Psoas muscle (tissue), 8 donors: ENCODE measurements at regions of chr5 and their contacts with region 1.

Region 1: DNA sequence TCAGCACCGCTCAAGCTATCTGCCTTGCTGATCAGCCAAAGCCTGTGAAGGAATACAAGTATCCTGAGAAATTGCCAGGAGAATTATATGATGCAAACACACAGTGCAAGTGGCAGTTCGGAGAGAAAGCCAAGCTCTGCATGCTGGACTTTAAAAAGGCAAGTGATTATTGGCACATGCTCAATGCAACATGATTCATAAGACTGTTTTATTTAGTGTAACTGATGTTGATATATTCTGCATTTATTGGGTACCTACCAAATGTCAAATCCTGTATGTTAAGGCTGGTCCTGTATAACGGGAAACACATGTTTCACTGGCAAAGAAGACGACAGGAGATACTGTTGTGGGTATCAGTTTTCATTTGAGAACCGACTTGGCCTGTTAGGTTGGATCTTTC is 69.0 kb downstream of the ADAMTS16 start:
- DNase-seq: no peak
- ATAC-seq: peak; percentile 56 to 94 (median 82)
- H3K4me3 ChIP-seq: peak overlapping the region; percentile 13
- H3K27ac ChIP-seq: peak overlapping the region; percentile 76
- H3K4me1 ChIP-seq: peaks cover 14% of the 10 kb centered on the region
- H3K27me3 ChIP-seq: no peaks in the 10 kb centered on the region
- CTCF ChIP-seq: no peak

Region 2: GRCh38 chr5:5164163-5164562 is 44.9 kb before region 1 on chr5:
- intact Hi-C with region 1: loop called in 1 of 2 experiments (anchors 5 kb)
- DNase-seq: no peak
- ATAC-seq: no peak
- H3K4me3 ChIP-seq: no peak overlapping the region
- H3K27ac ChIP-seq: no peak overlapping the region
- H3K4me1 ChIP-seq: peaks cover 4% of the 10 kb centered on the region
- H3K27me3 ChIP-seq: no peaks in the 10 kb centered on the region
- CTCF ChIP-seq: no peak

Region 3: DNA sequence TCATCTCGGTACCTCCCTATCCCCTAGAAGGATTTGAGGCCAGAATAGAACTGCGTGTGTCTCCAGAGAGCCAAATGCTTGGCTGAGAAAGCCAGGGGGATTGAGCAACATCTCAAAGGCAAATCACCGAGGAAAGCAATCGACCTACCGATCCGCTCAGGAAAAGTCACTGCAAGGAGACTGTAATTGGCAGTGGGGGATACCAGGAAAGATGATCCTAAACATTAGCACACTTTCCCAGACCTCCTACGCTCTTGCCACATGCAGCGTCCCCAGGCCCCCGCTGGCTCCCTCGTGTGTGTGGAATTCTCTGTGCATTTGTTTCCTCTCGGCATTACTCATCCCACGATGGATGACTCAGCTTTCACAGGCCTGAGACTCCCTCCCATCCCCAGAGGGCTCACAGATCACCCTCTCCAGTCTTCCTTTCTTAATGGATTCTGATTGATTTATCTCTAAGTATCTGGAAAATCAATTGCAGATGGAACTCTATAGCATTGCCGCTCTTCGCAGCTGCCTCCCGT is 131.2 kb after region 1 on chr5:
- intact Hi-C with region 1: loop called in 1 of 2 experiments (anchors 5 kb)
- DNase-seq: peak; percentile 87 to 90
- ATAC-seq: peak; percentile 97 to 99 (median 98)
- H3K4me3 ChIP-seq: no peak overlapping the region
- H3K27ac ChIP-seq: peak overlapping the region; percentile 57
- H3K4me1 ChIP-seq: peaks cover 37% of the 10 kb centered on the region
- H3K27me3 ChIP-seq: no peaks in the 10 kb centered on the region
- CTCF ChIP-seq: peak; percentile 54